Ascending aorta (tissue), 2 donors: ENCODE measurements at regions of chr15 and their contacts with region 1.

Region 1: DNA sequence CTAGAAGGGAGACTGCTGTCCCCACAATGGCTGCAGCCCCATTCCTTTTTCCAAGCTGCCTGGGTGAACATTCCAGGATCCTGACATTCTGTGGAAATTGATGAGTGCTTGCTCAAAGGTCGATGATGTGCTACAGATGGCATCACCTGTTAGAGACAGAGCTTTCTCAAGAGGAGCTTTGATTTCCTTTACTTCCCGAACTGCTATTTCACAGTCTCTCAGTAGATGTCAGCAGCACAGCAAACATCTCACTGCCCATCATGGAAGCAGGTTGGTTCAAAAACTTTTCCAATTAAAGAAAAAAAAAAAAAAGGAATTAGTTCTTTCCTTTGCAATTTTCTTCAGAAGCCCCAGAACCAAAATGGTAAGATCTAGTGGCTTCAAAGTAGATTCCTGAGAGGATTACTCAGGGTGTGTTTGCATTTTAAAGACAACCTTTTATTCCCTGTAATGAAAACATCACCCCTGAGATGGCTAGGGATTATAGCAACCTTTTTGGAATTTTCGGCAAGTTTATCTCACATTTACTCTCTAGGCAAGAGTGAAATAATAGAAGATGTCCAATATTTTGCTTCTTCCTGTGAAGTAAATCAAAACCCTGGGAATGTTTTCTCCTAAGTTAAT is 44.8 kb downstream of the POLR2M start:
- DNase-seq: no peak
- H3K4me3 ChIP-seq: no peak overlapping the region
- H3K27ac ChIP-seq: no peak overlapping the region
- H3K4me1 ChIP-seq: peaks cover 0 to 2% of the 10 kb centered on the region in 2 donors
- H3K27me3 ChIP-seq: no peaks in the 10 kb centered on the region
- CTCF ChIP-seq: peak; percentile 26 to 55 (median 34)

Region 2: GRCh38 chr15:57861036-57861638 is 109.8 kb after region 1 on chr15:
- intact Hi-C with region 1: loop called (anchors 5 kb)
- DNase-seq: no peak
- H3K4me3 ChIP-seq: no peak overlapping the region
- H3K27ac ChIP-seq: no peak overlapping the region
- H3K4me1 ChIP-seq: no peaks in the 10 kb centered on the region
- H3K27me3 ChIP-seq: no peaks in the 10 kb centered on the region
- CTCF ChIP-seq: peak; percentile 70 to 83 (median 75)